Endothelial cell of umbilical vein (primary cell): ENCODE measurements at regions of chr4 and their contacts with region 1.

Region 1: GRCh38 chr4:120718979-120719566 is 203.5 kb downstream of the PRDM5 start:
- DNase-seq: peak; percentile 49
- H3K4me3 ChIP-seq: no peak overlapping the region
- H3K27ac ChIP-seq: no peak overlapping the region
- H3K4me1 ChIP-seq: no peaks in the 10 kb centered on the region
- H3K27me3 ChIP-seq: no peaks in the 10 kb centered on the region
- CTCF ChIP-seq: peak; percentile 45 to 75
- POLR2A ChIP-seq: no peak

Region 2: DNA sequence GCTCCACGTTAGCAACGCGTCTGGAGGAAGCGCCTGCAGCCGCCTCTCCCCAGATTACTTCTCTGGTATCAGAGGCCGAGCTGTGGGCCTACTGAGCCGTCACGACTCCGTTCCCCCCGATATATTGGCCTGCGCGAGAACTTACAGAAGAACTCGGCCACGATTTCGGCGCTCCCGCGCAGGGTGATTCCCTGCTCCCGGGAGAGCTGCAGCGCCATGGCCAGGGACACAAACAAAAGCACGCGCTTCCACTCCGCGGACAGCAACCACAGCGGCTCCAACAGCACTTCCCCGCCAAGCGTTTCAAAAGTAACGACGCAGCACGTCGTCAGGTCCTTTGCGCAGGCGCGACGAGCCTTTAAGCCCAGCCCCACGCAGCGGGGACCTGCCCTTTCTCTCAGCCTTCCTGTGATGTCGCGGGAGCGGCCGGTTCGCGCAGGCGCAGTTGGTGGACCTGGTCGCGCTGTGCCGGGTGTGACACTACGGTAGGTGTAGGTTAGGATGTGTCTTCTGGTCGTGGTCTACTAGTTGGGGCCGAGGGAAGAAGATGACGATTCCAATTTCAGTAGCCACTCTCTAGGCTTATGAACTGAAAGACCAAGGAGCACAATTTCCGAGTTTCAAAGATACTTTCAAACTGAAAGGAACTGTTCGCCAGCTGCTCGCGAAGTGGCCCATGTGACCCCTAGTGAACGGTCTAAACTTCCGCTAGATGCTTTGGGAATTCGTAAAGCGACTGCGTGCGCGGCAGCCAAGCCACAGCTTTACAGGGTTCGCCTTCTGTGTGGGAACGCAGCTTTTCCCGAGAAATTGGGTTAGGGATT is 652.3 kb before region 1 on chr4 and contains the start of gene MAD2L1:
- CTCF ChIA-PET with region 1: no interaction called
- POLR2A ChIA-PET with region 1: no interaction called
- dilution Hi-C with region 1: no loop called
- intact Hi-C with region 1: loop called (anchors 5 kb)
- DNase-seq: peak; percentile 99
- H3K4me3 ChIP-seq: peak within 1 kb of the TSS; percentile 55 to 79 (median 75)
- H3K27ac ChIP-seq: peak within 1 kb of the TSS; percentile 76
- H3K4me1 ChIP-seq: peaks cover 35% of the 10 kb centered on the region
- H3K27me3 ChIP-seq: no peaks in the 10 kb centered on the region
- CTCF ChIP-seq: no peak
- POLR2A ChIP-seq: peak; percentile 94
- total RNA-seq, gene MAD2L1: 35.4 and 41.4 TPM in 2 replicates

Region 3: DNA sequence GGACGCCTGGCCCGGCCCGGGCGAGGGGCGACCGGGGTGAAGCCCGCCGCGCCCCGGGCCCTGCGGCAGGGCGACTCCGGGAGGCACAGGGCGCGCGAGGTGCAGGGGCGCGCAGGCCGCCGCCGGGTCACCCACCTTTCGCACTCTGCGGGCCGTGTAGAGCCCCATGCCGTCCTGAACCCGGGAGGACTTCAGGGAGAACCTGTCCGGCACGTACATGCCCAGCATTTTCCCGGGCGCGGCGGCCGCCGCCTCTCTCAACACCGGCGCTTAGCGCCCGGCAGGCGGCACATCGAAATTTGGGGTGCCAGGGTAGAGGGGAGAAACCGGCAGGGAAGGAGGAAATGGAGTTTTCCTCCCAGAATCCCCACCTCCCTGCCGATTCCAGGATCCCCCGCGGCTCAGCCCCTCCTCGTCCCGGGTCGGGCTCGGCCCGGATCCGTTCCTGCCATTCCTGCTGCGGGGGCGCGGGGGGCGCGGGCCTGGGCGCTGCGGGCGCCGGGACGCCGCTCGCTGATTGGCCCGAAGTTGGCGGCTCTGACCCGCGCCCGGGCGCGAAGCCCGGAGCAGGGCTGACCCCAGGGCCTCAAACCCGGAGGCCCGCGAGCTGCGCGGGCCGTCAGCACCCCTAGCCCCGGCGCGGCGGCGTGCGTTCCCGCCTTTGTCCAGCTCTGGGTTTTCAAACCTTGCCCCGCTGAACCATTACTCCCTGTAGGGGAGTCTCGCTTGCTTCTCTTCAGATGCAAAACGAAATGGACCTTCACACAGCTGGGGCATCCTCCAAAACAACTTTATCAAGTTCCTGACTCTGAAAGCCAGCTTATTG is 203.5 kb after region 1 on chr4 and contains the start of gene PRDM5:
- CTCF ChIA-PET with region 1: no interaction called
- POLR2A ChIA-PET with region 1: no interaction called
- dilution Hi-C with region 1: no loop called
- intact Hi-C with region 1: loop called (anchors 5 kb)
- DNase-seq: peak; percentile 52
- H3K4me3 ChIP-seq: peak within 1 kb of the TSS; percentile 10 to 79 (median 68)
- H3K27ac ChIP-seq: peak within 1 kb of the TSS; percentile 49
- H3K4me1 ChIP-seq: peaks cover 5% of the 10 kb centered on the region
- H3K27me3 ChIP-seq: no peaks in the 10 kb centered on the region
- CTCF ChIP-seq: peak in 1 of 2 donors; percentile 34
- POLR2A ChIP-seq: peak; percentile 27
- total RNA-seq, gene PRDM5: 5.7 and 8.1 TPM in 2 replicates

Region 4: DNA sequence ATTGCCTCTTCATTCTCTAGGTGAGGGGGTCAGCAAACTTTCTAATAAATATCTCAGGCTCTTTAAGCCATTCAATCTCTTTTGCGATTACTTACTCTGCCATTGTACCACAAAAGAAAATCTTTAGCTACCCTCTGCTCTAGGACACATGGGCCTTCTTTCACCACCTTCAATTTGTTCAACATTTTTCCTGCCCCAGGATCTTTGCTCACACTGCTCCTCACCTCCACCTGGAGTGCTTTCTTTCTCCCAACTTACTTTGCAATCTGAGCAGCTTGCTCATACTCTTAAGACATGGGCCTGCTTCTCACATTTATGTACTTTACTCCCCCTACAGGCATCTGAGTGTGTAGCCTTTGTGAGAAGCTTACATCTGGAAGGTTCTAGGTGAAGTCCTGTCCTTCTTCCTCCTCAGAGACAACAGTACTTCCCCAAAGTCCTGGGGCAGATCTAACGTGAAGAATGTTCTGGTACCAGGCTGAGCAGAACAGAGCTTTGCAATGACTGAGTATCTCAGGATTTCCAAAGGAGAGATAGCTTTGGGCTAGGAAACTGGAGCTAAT is 258.4 kb after region 1 on chr4:
- CTCF ChIA-PET with region 1: interaction called, 35 read pairs
- POLR2A ChIA-PET with region 1: no interaction called
- dilution Hi-C with region 1: no loop called
- intact Hi-C with region 1: loop called (anchors 1 kb)
- DNase-seq: peak; percentile 59
- H3K4me3 ChIP-seq: no peak overlapping the region
- H3K27ac ChIP-seq: no peak overlapping the region
- H3K4me1 ChIP-seq: no peaks in the 10 kb centered on the region
- H3K27me3 ChIP-seq: no peaks in the 10 kb centered on the region
- CTCF ChIP-seq: peak; percentile 26 to 63
- POLR2A ChIP-seq: no peak

Region 5: GRCh38 chr4:121096629-121097028 is 377.6 kb after region 1 on chr4:
- CTCF ChIA-PET with region 1: no interaction called
- POLR2A ChIA-PET with region 1: no interaction called
- dilution Hi-C with region 1: no loop called
- intact Hi-C with region 1: loop called (anchors 1 kb)
- DNase-seq: peak; percentile 37
- H3K4me3 ChIP-seq: no peak overlapping the region
- H3K27ac ChIP-seq: no peak overlapping the region
- H3K4me1 ChIP-seq: no peaks in the 10 kb centered on the region
- H3K27me3 ChIP-seq: no peaks in the 10 kb centered on the region
- CTCF ChIP-seq: peak in 1 of 2 donors; percentile 14
- POLR2A ChIP-seq: no peak

Region 6: DNA sequence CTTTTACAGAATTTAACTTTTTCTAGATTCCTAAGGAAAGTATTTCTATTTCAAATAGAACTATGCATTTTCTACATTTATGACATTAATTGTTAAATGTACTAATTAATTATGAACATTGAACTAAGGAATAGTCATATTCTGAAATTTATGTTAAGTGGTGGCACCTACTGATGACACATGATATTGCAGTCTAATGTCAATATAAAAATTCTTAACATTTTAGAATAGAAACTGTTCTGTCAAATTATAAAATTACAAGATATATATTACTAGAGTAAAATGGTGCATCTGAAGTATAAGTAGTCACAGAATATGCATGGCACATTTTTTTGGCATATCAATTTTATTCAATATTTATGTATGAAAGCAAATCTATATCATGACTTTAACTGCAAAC is 393.5 kb after region 1 on chr4:
- CTCF ChIA-PET with region 1: no interaction called
- POLR2A ChIA-PET with region 1: no interaction called
- dilution Hi-C with region 1: no loop called
- intact Hi-C with region 1: loop called (anchors 5 kb)
- DNase-seq: peak; percentile 7
- H3K4me3 ChIP-seq: no peak overlapping the region
- H3K27ac ChIP-seq: no peak overlapping the region
- H3K4me1 ChIP-seq: no peaks in the 10 kb centered on the region
- H3K27me3 ChIP-seq: peaks cover 5 to 8% of the 10 kb centered on the region in 2 experiments
- CTCF ChIP-seq: peak; percentile 1 to 13
- POLR2A ChIP-seq: no peak

Region 7: GRCh38 chr4:121252224-121252806 is 533.2 kb after region 1 on chr4:
- CTCF ChIA-PET with region 1: no interaction called
- POLR2A ChIA-PET with region 1: no interaction called
- dilution Hi-C with region 1: no loop called
- intact Hi-C with region 1: loop called (anchors 1 kb)
- DNase-seq: peak; percentile 65
- H3K4me3 ChIP-seq: no peak overlapping the region
- H3K27ac ChIP-seq: no peak overlapping the region
- H3K4me1 ChIP-seq: peaks cover 2% of the 10 kb centered on the region
- H3K27me3 ChIP-seq: peaks cover 0 to 3% of the 10 kb centered on the region in 2 experiments
- CTCF ChIP-seq: peak; percentile 75 to 81
- POLR2A ChIP-seq: no peak